ENCODE measurements at regions of chr12 and their contacts with region 1.

Region 1: DNA sequence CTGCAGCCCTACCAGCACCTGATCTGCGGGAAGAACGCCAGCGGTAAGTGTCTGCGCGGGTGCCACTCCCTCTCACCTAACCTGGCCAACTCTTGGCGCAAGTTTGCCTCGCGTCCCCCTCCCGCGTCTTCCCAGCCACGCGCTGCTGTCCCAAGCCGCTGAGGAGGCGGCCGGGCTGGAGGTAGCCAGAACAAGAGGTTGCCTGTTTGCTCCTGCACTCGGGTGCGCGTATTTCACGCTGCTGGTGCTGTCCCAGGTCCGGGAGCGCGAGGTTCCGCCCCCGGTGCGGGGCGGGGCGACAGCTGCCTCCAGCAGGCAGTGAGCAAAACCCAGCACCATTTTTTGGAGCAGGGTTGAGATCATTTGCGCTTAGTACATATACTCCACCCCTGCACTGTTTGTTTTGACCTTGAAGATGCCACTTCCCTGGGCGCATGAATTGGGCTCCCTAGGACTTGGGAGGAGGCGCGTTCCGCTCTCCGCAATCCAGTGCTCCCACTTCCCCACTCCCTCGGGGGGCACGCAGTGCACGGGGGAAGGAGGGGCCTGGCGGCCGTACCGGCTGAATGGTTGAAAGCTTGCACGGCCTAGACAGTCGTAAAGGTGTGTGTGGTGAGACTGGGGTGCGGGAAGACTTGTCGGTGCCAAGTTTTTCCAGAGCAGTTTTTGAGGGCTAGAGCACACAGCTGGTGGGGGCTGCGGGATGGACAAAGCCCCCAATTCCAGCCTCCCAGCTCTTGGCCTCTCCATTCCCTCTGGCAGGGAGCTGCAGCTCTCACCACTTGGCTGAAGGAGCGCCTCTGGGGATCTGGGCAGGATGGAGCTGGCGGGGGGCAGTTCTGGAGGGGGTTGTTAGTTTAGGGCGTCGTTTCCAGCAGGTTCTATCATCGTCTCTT is 226.9 kb upstream of the CRY1 start:
- DNase-seq: no peak
- H3K4me3 ChIP-seq: peak overlapping the region; percentile 73
- CTCF ChIP-seq: no peak

Region 2: DNA sequence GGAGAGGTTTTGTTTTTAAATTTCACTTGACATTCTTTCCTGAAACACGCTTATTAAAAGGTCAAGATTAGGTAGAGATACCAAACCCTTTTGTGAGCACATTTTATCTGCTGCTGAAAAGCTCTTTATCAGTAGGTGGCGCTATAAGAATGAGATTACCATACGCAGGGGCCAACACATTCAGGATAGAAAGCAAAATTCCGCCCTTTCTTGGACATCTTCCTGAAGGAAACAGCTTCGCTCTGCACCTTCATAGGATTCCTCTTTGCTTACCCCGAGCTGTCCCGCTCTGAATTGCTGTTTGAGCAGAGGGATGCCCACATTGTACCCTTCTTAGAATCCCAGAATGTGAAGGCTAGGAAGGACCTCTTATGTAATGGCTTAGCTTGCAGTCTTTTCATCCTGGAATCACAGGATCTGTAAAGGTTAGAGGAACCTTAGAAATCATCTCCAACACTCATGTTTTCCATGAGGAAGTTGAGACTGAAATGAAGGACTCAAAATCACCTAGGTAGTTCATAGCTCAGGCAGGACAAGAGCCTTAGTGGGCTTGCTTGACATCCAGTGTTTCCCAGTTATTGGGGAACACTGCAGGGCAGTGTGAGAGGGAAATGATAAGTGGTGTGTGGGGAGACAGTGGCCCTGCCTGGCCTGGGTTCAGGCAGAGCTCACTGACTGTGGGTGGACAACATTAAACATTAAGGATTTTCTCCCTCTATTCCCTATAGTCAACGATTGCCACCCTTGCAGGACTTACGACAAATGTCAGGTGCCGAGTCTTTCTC is 188.3 kb before region 1 on chr12:
- in situ Hi-C with region 1: loop called (anchors 5 kb)
- DNase-seq: peak; percentile 64
- H3K4me3 ChIP-seq: no peak overlapping the region
- CTCF ChIP-seq: peak; percentile 75

Region 3: GRCh38 chr12:107225635-107226034 is 94.6 kb before region 1 on chr12:
- in situ Hi-C with region 1: loop called (anchors 5 kb)
- DNase-seq: peak; percentile 22
- H3K4me3 ChIP-seq: no peak overlapping the region
- CTCF ChIP-seq: no peak

Region 4: DNA sequence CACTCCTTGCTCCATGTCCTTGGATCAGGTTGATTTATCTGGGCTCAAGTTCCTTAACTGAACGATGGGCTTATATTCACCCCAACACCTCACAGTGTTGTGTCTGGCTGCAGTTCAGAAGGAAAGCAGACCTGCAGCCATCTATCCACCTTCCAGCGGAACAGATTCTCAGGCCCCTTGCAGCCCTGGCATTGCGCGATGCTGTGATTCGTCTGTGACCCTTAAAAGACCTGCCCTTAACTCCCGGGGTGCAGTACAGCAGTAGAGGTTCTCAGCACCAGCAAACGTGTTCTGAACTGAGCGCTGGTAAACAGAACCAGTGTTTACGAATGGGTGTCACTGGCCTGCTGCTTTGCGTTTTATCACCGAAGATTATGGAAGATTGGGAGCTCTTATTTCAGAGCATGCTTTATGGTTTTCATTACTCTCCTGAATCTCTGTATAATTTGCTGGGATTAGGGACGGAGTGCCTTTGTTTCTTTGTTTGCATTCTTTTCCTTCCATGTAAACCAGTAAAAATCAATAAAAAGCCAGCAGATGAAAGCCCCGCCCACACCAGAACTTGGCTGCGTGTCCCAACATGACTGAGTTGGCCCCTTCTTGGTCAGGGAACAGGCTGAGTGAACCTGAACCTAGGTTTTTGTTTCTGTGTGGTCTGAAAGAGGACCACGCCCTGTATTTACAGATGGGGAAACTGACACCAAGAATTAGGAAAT is 59.7 kb after region 1 on chr12:
- in situ Hi-C with region 1: no loop called
- DNase-seq: no peak
- H3K4me3 ChIP-seq: no peak overlapping the region
- CTCF ChIP-seq: no peak

Region 5: GRCh38 chr12:107600581-107601144 is 280.4 kb after region 1 on chr12:
- in situ Hi-C with region 1: loop called (anchors 5 kb)
- DNase-seq: no peak
- H3K4me3 ChIP-seq: no peak overlapping the region
- CTCF ChIP-seq: no peak

Measured in astrocyte of the cerebellum (primary cell).